Mammary epithelial cell (primary cell): ENCODE measurements at regions of chr4 and their contacts with region 1.

Region 1: DNA sequence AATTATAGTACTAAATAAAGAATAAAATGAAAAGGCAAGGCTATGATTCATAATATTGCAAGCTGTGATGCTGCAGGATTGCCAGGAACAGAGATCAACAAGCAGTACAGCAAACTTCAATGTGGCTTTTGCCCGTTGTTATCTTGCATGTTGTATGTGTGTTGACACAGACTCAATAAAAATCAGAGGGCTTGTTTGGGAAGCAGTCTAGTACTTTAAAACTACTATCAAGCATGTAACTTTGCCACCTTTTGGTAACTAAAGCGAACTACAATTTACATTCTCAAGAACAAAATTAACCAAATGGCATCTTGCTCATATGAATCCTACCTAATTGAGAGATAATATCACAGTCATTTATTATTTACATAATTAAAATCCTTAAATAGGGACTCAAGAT is 79.8 kb upstream of the GPM6A start:
- DNase-seq: peak; percentile 2
- H3K4me3 ChIP-seq: no peak overlapping the region
- H3K27ac ChIP-seq: no peak overlapping the region
- H3K4me1 ChIP-seq: no peaks in the 10 kb centered on the region
- H3K27me3 ChIP-seq: peaks cover 9% of the 10 kb centered on the region
- CTCF ChIP-seq: peak; percentile 17 to 49

Region 2: GRCh38 chr4:175560604-175561003 is 331.2 kb before region 1 on chr4:
- CTCF ChIA-PET with region 1: no interaction called
- dilution Hi-C with region 1: no loop called
- in situ Hi-C with region 1: loop called (anchors 10 to 25 kb)
- intact Hi-C with region 1: loop called (anchors 1 kb)
- DNase-seq: peak; percentile 2
- H3K4me3 ChIP-seq: no peak overlapping the region
- H3K27ac ChIP-seq: no peak overlapping the region
- H3K4me1 ChIP-seq: no peaks in the 10 kb centered on the region
- H3K27me3 ChIP-seq: no peaks in the 10 kb centered on the region
- CTCF ChIP-seq: peak; percentile 10 to 46

Region 3: DNA sequence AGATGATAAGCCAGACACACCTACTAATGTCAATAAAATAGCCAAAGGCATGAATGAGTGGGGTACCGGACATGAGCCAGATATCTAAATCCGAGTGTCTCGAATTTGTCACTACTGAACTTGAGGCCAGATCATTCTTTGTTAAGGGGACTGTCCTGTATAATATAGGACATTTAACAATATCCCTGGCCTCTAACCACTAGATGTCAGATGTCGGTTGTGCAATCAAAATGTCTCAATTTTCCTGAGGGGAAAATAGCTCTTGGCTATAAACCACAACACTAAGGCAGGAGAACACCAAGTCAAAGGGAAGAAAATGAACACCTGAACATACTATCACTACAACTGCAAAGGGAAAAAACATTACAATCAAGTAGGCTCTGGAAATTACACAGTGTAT is 234.3 kb before region 1 on chr4:
- CTCF ChIA-PET with region 1: no interaction called
- dilution Hi-C with region 1: no loop called
- in situ Hi-C with region 1: no loop called
- intact Hi-C with region 1: loop called (anchors 5 kb)
- DNase-seq: no peak
- H3K4me3 ChIP-seq: no peak overlapping the region
- H3K27ac ChIP-seq: no peak overlapping the region
- H3K4me1 ChIP-seq: no peaks in the 10 kb centered on the region
- H3K27me3 ChIP-seq: no peaks in the 10 kb centered on the region
- CTCF ChIP-seq: peak in 1 of 2 donors; percentile 12